ENCODE measurements at regions of chr20 and their contacts with region 1.

Region 1: DNA sequence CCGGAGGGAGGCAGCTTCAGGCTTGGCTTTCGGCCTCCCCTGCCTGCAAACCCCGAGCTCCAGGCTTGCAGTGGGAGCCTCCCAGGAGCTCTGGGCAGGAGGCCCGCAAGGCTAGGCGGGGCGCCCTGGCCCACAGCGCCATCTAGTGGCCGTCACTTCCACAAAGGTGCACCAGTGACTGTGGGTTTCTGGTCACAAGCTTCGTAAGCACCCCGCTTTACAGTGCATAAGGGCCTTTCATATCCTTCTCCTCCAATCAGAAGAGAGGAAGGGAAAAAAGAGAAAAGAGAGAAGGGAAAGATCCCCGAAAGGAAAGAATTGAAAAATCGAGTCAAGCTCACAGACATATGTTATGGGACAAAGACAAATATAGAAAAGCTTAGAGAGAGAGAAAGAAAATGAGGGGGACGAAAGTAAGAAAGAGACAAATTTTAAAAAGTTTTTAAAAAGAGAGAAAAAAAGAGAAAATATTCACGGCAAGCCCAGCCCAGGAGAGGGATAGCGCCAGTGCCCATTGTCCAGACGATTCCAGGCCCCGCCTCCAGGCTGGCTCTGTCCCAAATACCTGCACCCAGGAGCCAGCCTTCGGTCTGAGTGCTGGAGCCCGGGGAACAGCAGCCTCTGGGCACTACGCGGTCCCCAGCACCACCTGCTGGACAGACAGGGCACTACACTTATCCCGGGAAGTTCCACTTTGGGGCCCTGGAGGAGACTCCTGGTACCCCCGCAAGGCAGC is 207.1 kb downstream of the PREX1 start:
- DNase-seq: peak; percentile 94 to 98
- H3K4me3 ChIP-seq: peak overlapping the region; percentile 20
- H3K4me3 Mint-ChIP-seq: peak overlapping the region; percentile 70
- H3K27ac Mint-ChIP-seq: peak overlapping the region; percentile 31
- H3K4me1 ChIP-seq: peaks cover 11% of the 10 kb centered on the region
- H3K4me1 Mint-ChIP-seq: peaks cover 6% of the 10 kb centered on the region
- H3K27me3 ChIP-seq: no peaks in the 10 kb centered on the region
- H3K27me3 Mint-ChIP-seq: no peaks in the 10 kb centered on the region
- CTCF ChIP-seq: peak; percentile 99 to 100

Region 2: DNA sequence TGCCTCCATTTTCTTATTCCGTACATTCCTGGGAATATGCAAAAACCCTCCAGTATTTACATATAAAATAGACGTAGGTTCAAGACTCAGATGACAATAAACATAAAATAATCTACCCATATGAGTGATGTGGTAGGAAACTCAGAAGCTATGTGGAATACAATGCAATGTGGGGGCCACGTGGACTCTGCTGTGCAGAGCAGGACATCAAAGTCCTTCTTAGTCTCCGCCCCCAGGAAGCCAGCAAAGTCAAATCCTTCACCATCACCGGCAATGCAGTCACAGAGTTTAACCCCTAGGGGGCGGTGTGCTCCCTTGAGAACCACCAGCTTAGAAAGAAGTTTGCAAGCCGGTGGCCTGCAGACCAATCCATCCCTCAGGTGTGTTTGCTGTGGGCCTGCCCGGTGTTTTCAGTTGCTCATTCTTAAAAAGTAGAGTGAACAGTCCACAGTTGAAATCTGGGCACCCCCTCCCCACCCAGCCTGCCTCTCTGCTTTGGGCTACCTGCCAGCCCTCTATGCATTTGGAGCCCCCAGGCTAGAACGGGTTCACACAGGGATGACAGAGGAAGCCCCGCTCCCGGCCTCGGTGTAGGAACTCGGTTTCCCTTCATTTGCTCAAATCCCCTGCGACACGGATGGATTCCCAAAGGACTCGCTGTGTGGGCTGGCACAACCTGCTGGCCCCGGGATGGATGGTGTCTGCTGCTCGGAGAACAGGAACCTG is 895.3 kb before region 1 on chr20:
- CTCF ChIA-PET with region 1: interaction called, 8 read pairs
- POLR2A ChIA-PET with region 1: no interaction called
- intact Hi-C with region 1: loop called (anchors 1 kb)
- DNase-seq: peak; percentile 94 to 95
- H3K4me3 ChIP-seq: no peak overlapping the region
- H3K4me3 Mint-ChIP-seq: no peak overlapping the region
- H3K27ac Mint-ChIP-seq: no peak overlapping the region
- H3K4me1 ChIP-seq: peaks cover 12% of the 10 kb centered on the region
- H3K4me1 Mint-ChIP-seq: peaks cover 9% of the 10 kb centered on the region
- H3K27me3 ChIP-seq: no peaks in the 10 kb centered on the region
- H3K27me3 Mint-ChIP-seq: no peaks in the 10 kb centered on the region
- CTCF ChIP-seq: peak; percentile 99 to 100

Region 3: DNA sequence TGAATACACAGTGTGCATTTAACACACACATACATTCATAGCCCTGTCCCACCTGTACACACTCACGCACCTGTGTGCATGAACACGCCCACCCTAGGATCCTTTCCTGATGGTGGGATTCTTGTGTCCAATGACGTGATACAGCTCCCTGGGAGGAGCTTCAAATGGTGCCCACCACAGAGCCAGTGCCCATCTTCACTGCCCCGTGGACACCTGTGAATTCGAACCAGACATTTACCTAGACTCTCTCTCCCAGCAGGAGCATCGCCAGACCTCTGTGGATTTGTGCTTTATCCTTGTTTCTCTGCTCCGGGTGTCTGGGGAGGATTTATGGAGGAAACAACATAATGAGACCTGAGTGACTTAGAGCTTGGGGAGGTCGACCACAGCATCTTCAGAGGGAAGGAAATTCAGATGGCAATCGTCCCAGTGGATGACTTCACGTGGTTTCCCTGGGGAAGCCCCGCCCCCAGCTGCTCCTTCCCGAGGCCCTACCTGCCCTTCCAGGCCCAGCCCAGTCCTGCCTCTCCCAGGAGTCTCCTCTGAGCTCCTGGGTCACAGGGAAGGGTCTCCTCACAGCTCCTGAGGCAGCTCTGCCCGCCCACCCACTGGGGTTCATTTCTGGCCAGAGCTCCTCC is 405.3 kb before region 1 on chr20:
- CTCF ChIA-PET with region 1: no interaction called
- POLR2A ChIA-PET with region 1: no interaction called
- intact Hi-C with region 1: no loop called
- DNase-seq: peak in 1 of 2 experiments; percentile 43
- H3K4me3 ChIP-seq: no peak overlapping the region
- H3K4me3 Mint-ChIP-seq: no peak overlapping the region
- H3K27ac Mint-ChIP-seq: peak overlapping the region; percentile 31
- H3K4me1 ChIP-seq: peaks cover 17% of the 10 kb centered on the region
- H3K4me1 Mint-ChIP-seq: peaks cover 7% of the 10 kb centered on the region
- H3K27me3 ChIP-seq: no peaks in the 10 kb centered on the region
- H3K27me3 Mint-ChIP-seq: no peaks in the 10 kb centered on the region
- CTCF ChIP-seq: no peak

Region 4: GRCh38 chr20:48295445-48295963 is 325.2 kb before region 1 on chr20:
- CTCF ChIA-PET with region 1: interaction called, 114 read pairs
- POLR2A ChIA-PET with region 1: interaction called, 5 read pairs
- intact Hi-C with region 1: loop called (anchors 1 kb)
- DNase-seq: peak; percentile 95 to 96
- H3K4me3 ChIP-seq: no peak overlapping the region
- H3K4me3 Mint-ChIP-seq: peak overlapping the region; percentile 53
- H3K27ac Mint-ChIP-seq: peak overlapping the region; percentile 95
- H3K4me1 ChIP-seq: peaks cover 43% of the 10 kb centered on the region
- H3K4me1 Mint-ChIP-seq: peaks cover 66% of the 10 kb centered on the region
- H3K27me3 ChIP-seq: no peaks in the 10 kb centered on the region
- H3K27me3 Mint-ChIP-seq: no peaks in the 10 kb centered on the region
- CTCF ChIP-seq: peak; percentile 73 to 77

Region 5: DNA sequence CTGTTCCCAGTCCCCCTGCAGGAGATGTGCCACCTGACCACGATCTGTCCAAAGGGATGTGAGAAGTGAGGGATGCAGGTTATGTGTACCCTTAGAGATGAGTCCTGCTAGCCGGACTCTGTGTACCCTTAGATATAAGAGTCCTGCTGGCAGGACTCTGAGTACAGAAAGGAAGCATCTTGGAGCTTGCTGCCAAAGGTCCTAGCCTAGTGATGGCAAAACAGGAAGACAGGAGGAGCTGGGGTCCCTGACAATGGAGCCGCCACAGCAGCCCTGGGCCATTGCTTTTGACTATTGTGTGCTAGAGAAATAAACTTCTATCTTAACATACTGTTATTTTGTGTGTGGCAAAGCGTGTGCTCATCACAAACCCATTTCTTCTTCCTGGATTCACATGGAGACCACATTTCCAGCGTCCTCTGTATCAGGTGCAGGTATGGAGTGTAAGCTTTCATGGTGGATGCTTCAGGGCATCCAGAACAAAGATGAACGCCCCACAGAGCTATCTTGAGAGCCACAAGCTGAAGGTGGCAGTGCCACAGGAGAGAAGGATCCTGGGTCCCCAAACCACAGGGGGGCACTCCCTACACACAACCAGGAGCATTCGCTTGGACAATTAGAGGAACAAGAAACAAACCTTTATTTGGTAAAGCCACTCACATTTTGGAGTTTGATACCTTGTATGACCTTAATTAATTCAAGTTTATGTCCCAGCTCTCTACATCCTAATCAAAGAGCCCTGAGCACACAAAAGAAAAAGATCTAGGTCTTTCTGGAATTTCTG is 199.3 kb before region 1 on chr20:
- CTCF ChIA-PET with region 1: interaction called, 41 read pairs
- POLR2A ChIA-PET with region 1: no interaction called
- intact Hi-C with region 1: loop called (anchors 1 kb)
- DNase-seq: peak; percentile 50 to 61
- H3K4me3 ChIP-seq: no peak overlapping the region
- H3K4me3 Mint-ChIP-seq: no peak overlapping the region
- H3K27ac Mint-ChIP-seq: no peak overlapping the region
- H3K4me1 ChIP-seq: no peaks in the 10 kb centered on the region
- H3K4me1 Mint-ChIP-seq: no peaks in the 10 kb centered on the region
- H3K27me3 ChIP-seq: no peaks in the 10 kb centered on the region
- H3K27me3 Mint-ChIP-seq: peaks cover 5% of the 10 kb centered on the region
- CTCF ChIP-seq: peak; percentile 40 to 59

Region 6: DNA sequence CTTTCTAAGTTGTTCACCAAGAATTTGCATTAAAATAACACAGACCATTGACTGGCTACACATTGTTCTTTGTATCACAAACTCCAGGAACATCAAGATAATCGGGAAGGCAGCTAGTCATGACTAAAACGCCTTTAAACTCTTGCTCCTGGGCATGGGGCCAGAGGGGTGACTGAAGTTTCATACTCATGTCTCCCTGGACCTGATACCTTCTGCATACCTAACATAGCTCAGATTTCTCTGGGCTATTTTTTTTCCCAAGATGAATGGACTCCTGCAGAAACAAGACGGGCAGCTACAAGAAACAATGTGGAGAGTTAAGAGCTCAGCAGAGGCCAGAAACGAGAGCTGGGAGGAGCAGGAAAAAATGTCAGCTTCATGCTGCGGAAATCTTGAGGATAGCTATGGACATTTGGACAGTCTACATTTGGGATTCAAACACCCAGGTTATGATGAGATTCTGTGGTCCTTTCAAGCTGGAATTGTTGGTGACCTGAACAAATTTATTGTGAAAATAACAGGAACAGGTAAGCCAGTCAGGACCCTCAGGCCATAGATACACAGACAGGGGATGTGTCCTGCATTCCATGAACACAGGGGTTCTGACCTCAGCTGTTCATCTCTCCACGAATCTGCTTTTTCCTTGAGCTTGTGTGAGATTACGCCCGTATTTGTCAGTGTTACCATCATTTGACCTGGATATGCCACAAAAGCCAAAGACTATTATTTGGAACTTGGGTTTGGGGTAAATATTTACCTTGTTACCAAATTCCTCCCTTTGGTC is 82.1 kb before region 1 on chr20:
- CTCF ChIA-PET with region 1: interaction called, 46 read pairs
- POLR2A ChIA-PET with region 1: no interaction called
- intact Hi-C with region 1: loop called (anchors 2 kb)
- DNase-seq: peak; percentile 90 to 94
- H3K4me3 ChIP-seq: no peak overlapping the region
- H3K4me3 Mint-ChIP-seq: peak overlapping the region; percentile 55
- H3K27ac Mint-ChIP-seq: peak overlapping the region; percentile 87
- H3K4me1 ChIP-seq: peaks cover 54% of the 10 kb centered on the region
- H3K4me1 Mint-ChIP-seq: peaks cover 51% of the 10 kb centered on the region
- H3K27me3 ChIP-seq: no peaks in the 10 kb centered on the region
- H3K27me3 Mint-ChIP-seq: no peaks in the 10 kb centered on the region
- CTCF ChIP-seq: no peak

Region 7: GRCh38 chr20:48595495-48596338 is 25.0 kb before region 1 on chr20:
- CTCF ChIA-PET with region 1: interaction called, 10 read pairs
- POLR2A ChIA-PET with region 1: no interaction called
- intact Hi-C with region 1: no loop called
- DNase-seq: peak in 1 of 2 experiments; percentile 40
- H3K4me3 ChIP-seq: no peak overlapping the region
- H3K4me3 Mint-ChIP-seq: no peak overlapping the region
- H3K27ac Mint-ChIP-seq: no peak overlapping the region
- H3K4me1 ChIP-seq: peaks cover 9% of the 10 kb centered on the region; the same call in 1 of the 2 replicates
- H3K4me1 Mint-ChIP-seq: no peaks in the 10 kb centered on the region
- H3K27me3 ChIP-seq: no peaks in the 10 kb centered on the region
- H3K27me3 Mint-ChIP-seq: no peaks in the 10 kb centered on the region
- CTCF ChIP-seq: no peak

Region 8: GRCh38 chr20:48853591-48854443 is 233.1 kb after region 1 on chr20:
- CTCF ChIA-PET with region 1: no interaction called
- POLR2A ChIA-PET with region 1: no interaction called
- intact Hi-C with region 1: no loop called
- DNase-seq: no peak
- H3K4me3 ChIP-seq: no peak overlapping the region
- H3K4me3 Mint-ChIP-seq: no peak overlapping the region
- H3K27ac Mint-ChIP-seq: peak overlapping the region; percentile 6
- H3K4me1 ChIP-seq: no peaks in the 10 kb centered on the region
- H3K4me1 Mint-ChIP-seq: peaks cover 5% of the 10 kb centered on the region
- H3K27me3 ChIP-seq: no peaks in the 10 kb centered on the region
- H3K27me3 Mint-ChIP-seq: no peaks in the 10 kb centered on the region
- CTCF ChIP-seq: no peak

Region 9: DNA sequence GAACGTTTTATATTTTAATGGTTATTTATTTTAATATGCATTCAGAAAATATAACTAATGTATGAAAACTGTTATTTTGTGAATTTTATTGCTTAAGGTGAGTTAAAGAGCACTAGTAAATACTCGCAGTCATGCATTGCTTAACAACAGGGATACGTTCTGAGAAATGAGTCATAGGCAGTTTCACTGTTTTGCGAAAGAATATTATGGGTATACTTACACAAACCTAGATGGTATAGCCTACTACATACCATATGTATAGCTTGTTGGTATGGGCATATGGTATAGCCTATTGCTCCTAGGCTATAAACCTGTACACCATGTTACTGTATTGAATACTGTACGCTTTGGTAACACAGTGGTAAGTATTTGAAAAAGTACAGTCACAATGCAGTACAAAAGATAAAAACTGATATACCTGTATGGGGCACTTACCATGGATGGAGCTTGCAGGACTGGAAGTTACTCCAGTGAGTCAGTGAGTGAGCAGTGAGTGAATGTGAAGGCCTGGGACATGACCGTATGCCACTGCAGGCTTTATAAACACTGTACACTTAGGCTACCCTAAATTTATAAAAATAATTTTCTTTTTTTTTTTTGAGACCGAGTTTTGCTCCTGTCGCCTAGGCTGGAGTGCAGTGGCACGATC is 339.3 kb after region 1 on chr20:
- CTCF ChIA-PET with region 1: no interaction called
- POLR2A ChIA-PET with region 1: no interaction called
- intact Hi-C with region 1: no loop called
- DNase-seq: no peak
- H3K4me3 ChIP-seq: no peak overlapping the region
- H3K4me3 Mint-ChIP-seq: no peak overlapping the region
- H3K27ac Mint-ChIP-seq: no peak overlapping the region
- H3K4me1 ChIP-seq: no peaks in the 10 kb centered on the region
- H3K4me1 Mint-ChIP-seq: no peaks in the 10 kb centered on the region
- H3K27me3 ChIP-seq: no peaks in the 10 kb centered on the region
- H3K27me3 Mint-ChIP-seq: no peaks in the 10 kb centered on the region
- CTCF ChIP-seq: no peak